ENCODE measurements at regions of chr16 and their contacts with region 1.

Region 1: GRCh38 chr16:56950881-56951771 is 10.6 kb upstream of the CETP start:
- DNase-seq: no peak
- ATAC-seq: peak; percentile 97
- H3K4me3 ChIP-seq: no peak overlapping the region
- H3K27ac ChIP-seq: no peak overlapping the region
- H3K4me1 ChIP-seq: no peaks in the 10 kb centered on the region
- H3K27me3 ChIP-seq: no peaks in the 10 kb centered on the region
- CTCF ChIP-seq: peak; percentile 71 to 81 (median 73)
- POLR2A ChIP-seq: no peak
- RAD21 ChIP-seq: peak; percentile 84

Region 2: GRCh38 chr16:56866943-56867830 is 83.9 kb before region 1 on chr16:
- CTCF ChIA-PET with region 1: interaction called, 7 read pairs
- POLR2A ChIA-PET with region 1: no interaction called
- RAD21 ChIA-PET with region 1: interaction called in 1 of 2 experiments, 4 read pairs
- intact Hi-C with region 1: loop called (anchors 1 kb)
- DNase-seq: peak; percentile 43
- ATAC-seq: peak; percentile 41
- H3K4me3 ChIP-seq: no peak overlapping the region
- H3K27ac ChIP-seq: no peak overlapping the region
- H3K4me1 ChIP-seq: peaks cover 0 to 5% of the 10 kb centered on the region in 2 experiments; a peak in 2 of 4 replicates
- H3K27me3 ChIP-seq: no peaks in the 10 kb centered on the region
- CTCF ChIP-seq: peak; percentile 64 to 84 (median 73)
- POLR2A ChIP-seq: no peak
- RAD21 ChIP-seq: peak; percentile 72

Region 3: DNA sequence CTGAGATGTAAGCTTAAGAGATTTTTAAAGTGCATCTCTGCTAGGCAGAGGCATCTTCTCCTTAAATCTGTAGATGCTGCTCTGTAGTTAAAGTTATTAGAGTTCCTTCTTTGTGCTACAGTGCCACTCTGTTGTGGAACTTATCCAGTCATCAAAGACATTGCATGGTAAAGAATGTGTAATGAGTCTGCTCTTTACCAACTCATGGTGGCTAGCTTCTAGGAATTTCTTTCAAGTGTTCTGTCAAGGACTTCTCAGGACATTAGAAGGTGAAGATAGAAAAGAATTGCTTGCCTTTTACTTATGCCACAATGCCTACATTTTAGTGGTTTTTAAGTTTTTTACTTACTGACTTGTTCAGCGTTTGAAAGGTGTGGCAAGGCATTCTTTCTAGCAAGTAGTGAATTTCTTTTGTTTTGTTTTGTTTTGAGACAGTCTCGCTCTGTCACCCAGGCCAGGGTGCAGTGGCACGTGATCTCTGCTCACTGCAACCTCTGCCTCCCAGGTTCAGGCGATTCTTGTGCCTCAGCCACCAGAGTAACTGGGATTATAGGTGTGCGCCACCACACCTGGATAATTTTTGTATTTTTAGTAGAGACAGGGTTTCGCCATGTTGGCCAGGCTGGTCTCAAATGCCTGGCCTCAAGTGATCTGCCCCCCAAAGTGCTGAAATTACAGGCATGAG is 273.7 kb after region 1 on chr16:
- CTCF ChIA-PET with region 1: no interaction called
- POLR2A ChIA-PET with region 1: no interaction called
- RAD21 ChIA-PET with region 1: no interaction called
- intact Hi-C with region 1: no loop called
- DNase-seq: no peak
- ATAC-seq: no peak
- H3K4me3 ChIP-seq: no peak overlapping the region
- H3K27ac ChIP-seq: no peak overlapping the region
- H3K4me1 ChIP-seq: peaks cover 0 to 6% of the 10 kb centered on the region in 2 experiments; a peak in 1 of 4 replicates
- H3K27me3 ChIP-seq: no peaks in the 10 kb centered on the region
- CTCF ChIP-seq: no peak
- POLR2A ChIP-seq: no peak
- RAD21 ChIP-seq: no peak

Measured in HCT116 (cell line).